Activated CD8-positive, alpha-beta T cell treated with anti-CD3 and anti-CD28 coated beads, Interleukin-2, amount 10 ng/mL, durations not matched to agents 7 days and 5 days (primary cell): ENCODE measurements at regions of chr2 and their contacts with region 1.

Region 1: DNA sequence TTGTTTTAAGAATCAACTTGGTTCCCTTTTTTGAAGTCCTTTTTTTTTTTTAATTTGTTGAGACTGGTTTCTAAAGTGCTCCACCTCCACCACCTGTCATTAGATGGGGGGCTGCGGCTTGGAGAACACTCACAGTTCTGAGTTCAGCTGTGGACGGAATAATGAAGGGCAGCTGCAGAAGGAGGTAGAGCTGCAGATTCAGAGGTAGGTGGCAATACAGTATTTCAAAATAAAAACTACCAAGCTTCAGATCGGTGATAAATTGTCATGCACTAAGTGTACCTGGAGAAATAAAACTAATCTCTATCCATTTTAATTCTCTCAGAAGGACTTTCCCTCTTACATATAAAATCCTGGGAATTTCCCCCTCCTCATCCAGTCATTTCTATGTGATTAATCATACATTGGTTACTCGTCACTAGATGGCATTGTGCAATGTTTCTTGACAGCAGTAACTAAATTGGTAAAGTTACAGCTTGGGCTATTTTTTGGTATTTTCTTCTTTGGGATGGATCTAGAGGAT is 81.1 kb upstream of the SLC39A10 start:
- DNase-seq: peak; percentile 44
- ATAC-seq: peak; percentile 68
- H3K4me3 Mint-ChIP-seq: peak overlapping the region; percentile 36
- H3K27ac Mint-ChIP-seq: peak overlapping the region; percentile 68
- H3K4me1 Mint-ChIP-seq: peaks cover 71% of the 10 kb centered on the region
- H3K27me3 Mint-ChIP-seq: no peaks in the 10 kb centered on the region

Region 2: GRCh38 chr2:195238379-195238778 is 337.6 kb before region 1 on chr2:
- CTCF ChIA-PET with region 1: no interaction called
- POLR2A ChIA-PET with region 1: no interaction called
- DNase-seq: no peak
- ATAC-seq: no peak
- H3K4me3 Mint-ChIP-seq: no peak overlapping the region
- H3K27ac Mint-ChIP-seq: no peak overlapping the region
- H3K4me1 Mint-ChIP-seq: no peaks in the 10 kb centered on the region
- H3K27me3 Mint-ChIP-seq: no peaks in the 10 kb centered on the region

Region 3: DNA sequence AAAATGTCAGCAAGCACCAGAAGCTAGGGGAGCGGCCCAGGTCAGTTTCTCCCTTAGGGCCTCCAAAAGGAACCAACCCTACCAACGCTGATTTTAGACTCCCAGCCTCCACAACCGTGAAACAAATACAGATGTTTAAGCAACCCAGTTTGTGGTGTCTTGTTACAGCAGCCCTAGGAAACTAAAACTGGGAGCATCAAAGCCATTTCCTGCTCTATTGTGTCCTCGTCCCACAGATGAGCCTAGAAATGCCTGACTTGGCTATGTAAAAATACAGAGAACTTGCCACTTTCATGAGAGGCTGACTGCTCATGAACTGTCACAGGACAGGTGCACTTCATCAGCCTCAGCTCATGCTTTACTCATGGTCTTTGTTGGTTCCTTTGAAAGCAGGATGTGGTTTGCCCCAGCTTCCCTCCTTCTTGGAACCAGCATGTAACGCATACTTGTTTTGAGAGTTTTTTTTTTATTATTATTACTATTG is 16.5 kb before region 1 on chr2:
- CTCF ChIA-PET with region 1: interaction called, 16 read pairs
- POLR2A ChIA-PET with region 1: interaction called, 4 read pairs
- DNase-seq: peak; percentile 95
- ATAC-seq: peak; percentile 94
- H3K4me3 Mint-ChIP-seq: peak overlapping the region; percentile 52
- H3K27ac Mint-ChIP-seq: peak overlapping the region; percentile 98
- H3K4me1 Mint-ChIP-seq: peaks cover 72% of the 10 kb centered on the region
- H3K27me3 Mint-ChIP-seq: no peaks in the 10 kb centered on the region

Region 4: GRCh38 chr2:195590861-195591205 is 14.9 kb after region 1 on chr2:
- CTCF ChIA-PET with region 1: interaction called, 19 read pairs
- POLR2A ChIA-PET with region 1: no interaction called
- DNase-seq: no peak
- ATAC-seq: no peak
- H3K4me3 Mint-ChIP-seq: no peak overlapping the region
- H3K27ac Mint-ChIP-seq: no peak overlapping the region
- H3K4me1 Mint-ChIP-seq: peaks cover 21% of the 10 kb centered on the region
- H3K27me3 Mint-ChIP-seq: no peaks in the 10 kb centered on the region